BJ (cell line): ENCODE measurements at regions of chr1 and their contacts with region 1.

Region 1: DNA sequence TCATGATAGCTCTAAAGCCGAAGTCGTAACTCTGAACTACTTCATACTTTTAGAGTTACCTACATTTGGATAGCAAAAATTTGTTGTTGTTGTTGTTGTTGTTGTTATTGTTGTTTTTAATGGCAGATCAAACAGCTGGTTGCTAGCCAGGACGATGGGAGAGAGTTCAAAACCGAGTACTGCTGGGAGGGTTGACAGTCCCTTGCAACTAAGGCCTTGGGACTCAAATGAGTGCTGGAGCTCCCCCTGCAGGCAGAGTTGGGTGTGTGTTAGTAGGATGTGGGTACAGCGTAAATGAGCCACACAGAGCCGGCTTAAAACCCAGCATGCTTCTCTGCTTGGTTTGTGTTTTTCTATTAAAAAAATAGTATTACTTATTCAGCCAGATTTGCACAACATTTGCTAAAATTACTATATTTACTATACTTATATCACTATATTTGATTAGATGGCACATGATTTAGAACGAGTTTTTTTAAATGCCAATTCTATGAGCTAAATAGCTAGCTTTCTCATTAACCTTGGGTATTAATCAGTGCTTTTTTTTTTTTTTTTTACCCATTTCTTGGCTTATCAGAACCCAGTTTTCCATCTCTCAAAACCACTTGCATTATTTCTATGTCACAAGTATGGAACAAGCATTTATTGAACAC is 129.2 kb upstream of the SYT6 start:
- DNase-seq: peak; percentile 16
- H3K4me3 ChIP-seq: no peak overlapping the region
- H3K27me3 ChIP-seq: peaks cover 3% of the 10 kb centered on the region; the same call in 1 of the 2 replicates
- CTCF ChIP-seq: peak; percentile 92

Region 2: DNA sequence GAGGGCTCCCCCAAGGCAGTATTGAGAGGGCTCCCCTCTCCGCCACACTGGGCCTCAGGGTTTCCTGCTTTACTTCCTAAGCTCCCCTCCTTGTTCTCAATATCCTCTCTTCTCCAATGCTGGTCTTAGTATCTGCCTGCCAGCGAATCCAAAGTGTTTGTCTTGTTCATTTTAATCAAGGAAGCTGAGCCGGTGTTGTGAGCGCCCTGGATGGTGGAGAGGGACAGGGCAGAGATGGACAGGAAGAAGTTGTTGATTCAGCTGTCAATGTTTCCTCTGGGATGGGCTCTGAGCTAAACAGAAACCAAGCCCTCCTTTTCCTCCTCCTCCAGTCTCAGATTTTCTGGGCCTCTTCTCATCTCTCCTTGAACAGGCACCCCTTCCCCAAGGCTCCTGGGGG is 298.2 kb before region 1 on chr1:
- CTCF ChIA-PET with region 1: interaction called, 160 read pairs
- POLR2A ChIA-PET with region 1: no interaction called
- DNase-seq: no peak
- H3K4me3 ChIP-seq: no peak overlapping the region
- H3K27me3 ChIP-seq: no peaks in the 10 kb centered on the region
- CTCF ChIP-seq: no peak